ENCODE measurements at regions of chr5 and their contacts with region 1.

Region 1: DNA sequence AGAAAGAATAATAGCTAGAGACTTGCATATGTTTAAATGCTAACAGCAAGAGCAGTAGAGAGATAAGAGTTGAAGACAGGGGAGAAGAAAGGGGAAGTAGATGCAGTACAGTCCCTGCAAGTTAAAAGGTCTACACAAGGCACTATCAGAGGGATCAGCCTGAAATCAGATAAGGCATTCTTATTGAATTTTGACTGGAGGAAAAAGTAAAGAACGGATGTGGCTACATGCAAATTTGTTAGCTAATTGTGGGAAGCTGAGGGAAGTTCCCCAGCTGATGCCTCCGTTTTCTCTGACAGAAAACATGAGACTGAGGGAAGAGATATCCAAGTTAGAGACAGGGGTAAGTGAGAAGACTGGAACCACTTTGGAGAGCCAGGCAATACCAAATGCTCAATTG is 12.9 kb upstream of the RHOBTB3 start:
- DNase-seq: peak; percentile 51
- ATAC-seq: peak; percentile 79
- H3K4me3 Mint-ChIP-seq: no peak overlapping the region
- H3K27ac Mint-ChIP-seq: no peak overlapping the region
- H3K4me1 Mint-ChIP-seq: peaks cover 13% of the 10 kb centered on the region
- H3K27me3 Mint-ChIP-seq: peaks cover 7% of the 10 kb centered on the region

Region 2: DNA sequence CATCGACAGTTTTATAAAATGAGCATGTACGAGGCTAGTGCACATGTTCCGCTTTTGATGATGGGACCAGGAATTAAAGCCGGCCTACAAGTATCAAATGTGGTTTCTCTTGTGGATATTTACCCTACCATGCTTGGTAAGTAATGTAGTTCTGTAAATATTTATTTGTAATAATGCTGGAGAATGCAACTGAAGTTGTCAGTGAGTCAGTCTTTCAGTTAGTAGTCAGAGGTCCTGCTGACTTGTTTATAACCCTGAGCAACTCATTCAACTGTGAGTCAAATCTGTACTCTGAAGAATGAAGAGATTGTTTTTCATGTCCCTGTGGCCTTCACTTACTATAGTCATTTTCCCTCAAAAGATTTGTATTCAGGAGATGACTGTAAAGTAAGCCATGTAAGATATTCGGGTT is 126.7 kb before region 1 on chr5:
- CTCF ChIA-PET with region 1: no interaction called
- POLR2A ChIA-PET with region 1: no interaction called
- intact Hi-C with region 1: loop called in 1 of 2 experiments (anchors 2 kb)
- DNase-seq: no peak
- ATAC-seq: peak; percentile 95
- H3K4me3 Mint-ChIP-seq: no peak overlapping the region
- H3K27ac Mint-ChIP-seq: peak overlapping the region; percentile 62
- H3K4me1 Mint-ChIP-seq: peaks cover 30% of the 10 kb centered on the region
- H3K27me3 Mint-ChIP-seq: no peaks in the 10 kb centered on the region

Region 3: GRCh38 chr5:95620030-95620869 is 98.0 kb before region 1 on chr5 and contains the start of gene GPR150:
- CTCF ChIA-PET with region 1: no interaction called
- POLR2A ChIA-PET with region 1: no interaction called
- intact Hi-C with region 1: no loop called
- DNase-seq: peak; percentile 81
- ATAC-seq: peak; percentile 65
- H3K4me3 Mint-ChIP-seq: peak within 1 kb of the TSS; percentile 75
- H3K27ac Mint-ChIP-seq: peak within 1 kb of the TSS; percentile 73
- H3K4me1 Mint-ChIP-seq: peaks cover 47% of the 10 kb centered on the region
- H3K27me3 Mint-ChIP-seq: no peaks in the 10 kb centered on the region
- total RNA-seq, gene GPR150: 0.37 to 0.46 TPM

Region 4: DNA sequence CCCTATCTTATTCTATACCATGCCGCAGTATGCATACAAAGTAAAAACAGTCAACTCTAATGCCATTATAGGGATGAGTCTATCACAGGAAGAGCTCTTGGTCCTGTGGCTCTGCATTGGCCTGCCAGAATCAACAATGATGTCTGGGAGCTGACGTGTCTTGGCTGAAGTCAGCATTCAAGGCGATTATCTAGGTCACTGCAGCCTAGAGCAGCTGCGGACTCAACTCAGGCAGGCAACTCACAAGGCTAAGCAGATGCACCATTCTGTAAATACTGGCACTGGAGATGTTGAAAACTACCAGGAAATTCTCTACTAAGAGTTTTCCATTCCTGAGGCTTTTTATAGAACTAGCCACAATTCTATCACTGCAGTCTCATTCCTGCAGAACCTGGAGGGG is 48.7 kb before region 1 on chr5:
- CTCF ChIA-PET with region 1: interaction called, 5 read pairs
- POLR2A ChIA-PET with region 1: no interaction called
- intact Hi-C with region 1: loop called in 1 of 2 experiments (anchors 5 kb)
- DNase-seq: no peak
- ATAC-seq: no peak
- H3K4me3 Mint-ChIP-seq: no peak overlapping the region
- H3K27ac Mint-ChIP-seq: no peak overlapping the region
- H3K4me1 Mint-ChIP-seq: no peaks in the 10 kb centered on the region
- H3K27me3 Mint-ChIP-seq: no peaks in the 10 kb centered on the region

Region 5: DNA sequence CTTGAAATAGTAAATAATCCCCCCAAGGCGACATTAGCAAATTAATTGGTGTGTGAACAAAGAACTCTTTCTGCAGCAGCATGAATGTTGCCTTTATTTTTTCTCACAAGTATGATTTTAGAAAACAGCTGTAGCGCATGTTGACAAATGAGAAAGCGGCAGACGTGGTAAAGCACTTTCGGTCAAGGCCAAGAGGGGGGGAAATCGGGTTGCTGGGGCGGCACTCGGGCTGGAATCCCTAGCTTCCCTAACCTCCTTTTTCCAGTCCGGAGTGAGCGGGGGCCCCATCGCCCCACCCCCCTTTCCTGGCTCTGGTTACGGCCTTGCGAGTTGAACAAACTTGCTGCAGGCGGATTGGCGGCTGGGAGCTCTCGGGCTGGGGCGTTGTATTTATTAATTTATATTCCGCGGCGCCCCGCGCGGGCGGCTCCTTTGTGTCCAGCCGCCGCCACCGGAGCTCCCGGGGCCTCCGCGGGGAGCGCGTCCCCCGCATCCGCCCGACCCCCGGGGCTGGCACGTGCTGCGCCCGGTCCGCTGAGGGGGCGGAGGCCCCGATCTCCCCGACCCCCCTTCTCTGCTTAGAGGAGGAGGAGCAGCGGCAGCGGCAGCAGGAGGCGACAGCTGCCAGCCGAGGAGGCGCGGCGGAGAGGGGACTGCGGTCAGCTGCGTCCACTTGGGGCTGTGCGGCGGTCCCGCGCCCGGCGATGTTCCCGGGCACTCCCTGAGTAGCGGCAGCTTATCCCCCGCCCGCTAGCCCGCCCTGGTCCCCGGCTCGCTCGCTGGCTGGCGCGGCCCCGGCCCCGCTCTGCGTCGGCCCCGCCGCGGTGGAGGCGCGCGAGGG is 12.7 kb after region 1 on chr5 and contains the start of gene RHOBTB3:
- CTCF ChIA-PET with region 1: interaction called, 8 read pairs
- POLR2A ChIA-PET with region 1: no interaction called
- intact Hi-C with region 1: loop called in 1 of 2 experiments (anchors 1 kb)
- DNase-seq: peak; percentile 62
- ATAC-seq: peak; percentile 52
- H3K4me3 Mint-ChIP-seq: peak within 1 kb of the TSS; percentile 75
- H3K27ac Mint-ChIP-seq: peak within 1 kb of the TSS; percentile 72
- H3K4me1 Mint-ChIP-seq: peaks cover 64% of the 10 kb centered on the region
- H3K27me3 Mint-ChIP-seq: peaks cover 33% of the 10 kb centered on the region
- total RNA-seq, gene RHOBTB3: 3.3 to 3.5 TPM

Region 6: DNA sequence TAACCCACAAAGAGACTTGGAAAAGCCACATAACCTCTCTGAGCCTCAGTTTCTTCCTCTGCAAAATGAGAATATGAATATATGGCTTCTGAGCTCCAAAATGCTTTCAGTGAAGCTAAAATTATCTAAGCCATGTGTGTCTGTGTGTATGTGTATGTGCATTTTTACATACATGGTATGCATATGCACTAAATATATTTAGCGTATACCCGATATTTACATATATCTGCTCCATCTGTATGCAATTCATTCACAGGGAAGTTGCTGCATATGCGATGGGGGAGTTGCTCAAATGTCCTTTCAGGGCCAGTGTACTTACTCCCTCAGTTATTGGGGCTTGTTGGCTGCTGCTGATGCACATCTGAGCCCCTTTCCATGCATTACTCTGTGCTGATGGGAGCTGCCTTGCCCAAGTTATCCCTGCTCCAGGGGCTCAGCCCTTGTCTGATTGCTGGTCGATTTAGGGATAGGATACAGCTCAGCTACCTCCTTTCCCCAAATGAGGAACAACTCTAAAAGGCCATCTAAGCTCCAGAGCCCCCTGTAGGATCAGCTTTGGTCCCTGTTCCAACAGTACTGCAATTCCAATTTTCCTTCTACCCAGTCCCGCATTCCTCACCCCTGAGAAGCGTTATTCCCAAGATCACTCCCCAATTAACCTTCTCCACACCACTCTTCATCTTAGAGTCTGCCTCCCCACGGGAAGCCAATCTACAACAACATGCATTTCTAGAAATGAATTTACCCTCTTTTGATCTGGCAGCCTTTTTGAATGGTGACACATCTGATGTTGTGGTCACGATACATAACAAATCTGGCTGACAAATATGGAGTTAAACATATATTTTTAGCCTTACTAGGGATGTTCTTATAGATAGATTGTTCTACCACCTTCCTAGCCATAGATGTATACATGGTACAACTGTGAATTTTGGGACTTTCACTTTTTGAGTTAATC is 28.8 kb after region 1 on chr5:
- CTCF ChIA-PET with region 1: interaction called, 3 read pairs
- POLR2A ChIA-PET with region 1: no interaction called
- intact Hi-C with region 1: loop called in 1 of 2 experiments (anchors 2 kb)
- DNase-seq: peak; percentile 20
- ATAC-seq: peak; percentile 88
- H3K4me3 Mint-ChIP-seq: no peak overlapping the region
- H3K27ac Mint-ChIP-seq: no peak overlapping the region
- H3K4me1 Mint-ChIP-seq: peaks cover 13% of the 10 kb centered on the region
- H3K27me3 Mint-ChIP-seq: no peaks in the 10 kb centered on the region

Region 7: DNA sequence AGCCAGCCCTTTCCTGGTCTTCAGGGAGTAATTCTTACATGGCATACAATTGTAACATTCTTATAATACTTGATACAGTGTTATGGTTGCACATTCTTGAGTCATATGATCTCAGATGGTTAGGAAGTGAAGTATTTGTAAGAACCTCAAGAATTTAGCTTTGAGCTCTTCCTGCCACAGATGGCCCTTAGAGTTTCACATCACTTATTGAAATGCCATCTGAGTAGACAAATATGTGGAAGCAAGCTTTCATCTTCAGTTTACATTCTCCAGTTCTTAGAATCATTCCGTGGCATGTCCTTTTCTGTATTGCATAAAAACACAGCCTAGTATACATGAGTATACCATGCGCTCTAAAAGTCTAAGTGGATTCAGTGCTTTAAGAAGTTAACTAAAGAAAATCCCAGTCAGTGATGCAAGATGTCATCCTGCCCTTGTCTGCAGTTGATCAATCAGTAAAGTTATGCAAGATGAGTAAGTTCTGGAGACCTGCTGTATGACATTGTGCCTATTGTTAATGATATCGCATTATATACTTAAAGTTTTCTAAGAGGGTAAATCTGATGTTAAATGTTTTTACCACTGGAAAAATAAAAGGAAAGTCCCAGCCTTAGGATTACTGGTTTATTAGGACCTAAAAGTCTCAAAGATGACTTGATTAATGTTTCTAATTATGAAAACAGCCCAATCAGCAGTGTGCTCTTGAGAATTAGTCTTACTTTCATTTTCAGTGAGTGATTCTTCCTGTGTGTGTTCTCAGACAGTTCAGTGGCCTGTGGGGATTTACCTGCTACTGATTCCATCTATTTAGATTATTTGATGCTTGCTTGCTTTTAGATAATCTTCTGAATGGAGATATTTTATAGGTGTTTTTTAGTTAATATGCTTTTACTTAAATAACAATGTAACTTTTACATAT is 42.3 kb after region 1 on chr5:
- CTCF ChIA-PET with region 1: interaction called, 3 read pairs
- POLR2A ChIA-PET with region 1: no interaction called
- intact Hi-C with region 1: loop called (anchors 2 kb)
- DNase-seq: peak; percentile 29
- ATAC-seq: peak; percentile 91
- H3K4me3 Mint-ChIP-seq: peak overlapping the region; percentile 52
- H3K27ac Mint-ChIP-seq: peak overlapping the region; percentile 69
- H3K4me1 Mint-ChIP-seq: peaks cover 27% of the 10 kb centered on the region
- H3K27me3 Mint-ChIP-seq: no peaks in the 10 kb centered on the region

Region 8: DNA sequence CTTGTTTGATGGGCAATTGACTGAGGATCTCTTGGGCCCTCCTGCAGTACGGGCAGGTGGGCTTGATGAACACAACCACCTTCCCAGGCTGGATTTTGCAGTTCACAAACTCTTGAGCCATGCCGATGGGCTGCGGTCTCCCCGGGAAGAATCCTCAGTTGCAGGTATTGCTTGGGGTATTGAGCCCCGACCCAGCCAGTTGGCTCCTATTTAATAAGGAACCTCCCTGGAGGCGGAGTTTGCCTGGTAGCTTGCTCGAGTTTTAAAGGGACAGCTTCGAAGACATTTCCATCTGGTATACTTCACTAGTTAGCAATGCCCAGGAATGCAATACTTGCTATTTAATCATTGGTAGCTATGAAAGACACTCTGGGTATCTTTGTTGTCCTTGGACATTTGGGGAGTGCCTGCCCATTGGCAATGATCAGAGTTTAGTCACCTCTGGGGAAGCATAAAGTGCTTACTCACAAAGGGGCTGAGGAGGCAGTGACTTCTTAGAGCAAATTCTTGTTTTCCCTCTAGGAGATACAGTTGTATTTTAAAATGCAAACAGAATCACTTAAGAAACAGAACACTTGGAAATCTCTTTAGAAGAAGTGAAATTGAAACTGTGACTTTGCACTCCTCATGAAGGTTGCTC is 104.5 kb after region 1 on chr5 and contains the start of gene GLRX:
- CTCF ChIA-PET with region 1: no interaction called
- POLR2A ChIA-PET with region 1: no interaction called
- intact Hi-C with region 1: loop called in 1 of 2 experiments (anchors 5 kb)
- DNase-seq: peak; percentile 68
- ATAC-seq: peak; percentile 18
- H3K4me3 Mint-ChIP-seq: peak within 1 kb of the TSS; percentile 92
- H3K27ac Mint-ChIP-seq: peak within 1 kb of the TSS; percentile 92
- H3K4me1 Mint-ChIP-seq: peaks cover 62% of the 10 kb centered on the region
- H3K27me3 Mint-ChIP-seq: no peaks in the 10 kb centered on the region
- total RNA-seq, gene GLRX: 21.0 to 31.5 TPM